ENCODE measurements at regions of chr16 and their contacts with region 1.

Region 1: GRCh38 chr16:29112755-29113347 is 128.0 kb downstream of the LAT start:
- DNase-seq: no peak
- ATAC-seq: no peak
- H3K4me3 ChIP-seq: no peak overlapping the region
- H3K27ac ChIP-seq: no peak overlapping the region
- H3K4me1 ChIP-seq: no peaks in the 10 kb centered on the region
- H3K27me3 ChIP-seq: no peaks in the 10 kb centered on the region
- CTCF ChIP-seq: no peak

Region 2: GRCh38 chr16:29315615-29316517 is 203.0 kb after region 1 on chr16:
- intact Hi-C with region 1: loop called (anchors 10 kb)
- DNase-seq: no peak
- ATAC-seq: peak in 1 of 4 donors; percentile 44
- H3K4me3 ChIP-seq: no peak overlapping the region
- H3K27ac ChIP-seq: no peak overlapping the region
- H3K4me1 ChIP-seq: no peaks in the 10 kb centered on the region
- H3K27me3 ChIP-seq: no peaks in the 10 kb centered on the region
- CTCF ChIP-seq: peak; percentile 25

Measured in psoas muscle (tissue), 8 donors.